CD8-positive, alpha-beta T cell (primary cell): ENCODE measurements at regions of chr1 and their contacts with region 1.

Region 1: GRCh38 chr1:112466078-112466660 is 42.6 kb upstream of the WNT2B start:
- DNase-seq: peak; percentile 66 to 90 (median 83)
- ATAC-seq: peak; percentile 95
- H3K4me3 ChIP-seq: peak overlapping the region; percentile 31 to 42
- H3K4me3 Mint-ChIP-seq: peak overlapping the region; percentile 80
- H3K27ac ChIP-seq: no peak overlapping the region
- H3K27ac Mint-ChIP-seq: no peak overlapping the region
- H3K4me1 ChIP-seq: peaks cover 8% of the 10 kb centered on the region
- H3K4me1 Mint-ChIP-seq: peaks cover 14% of the 10 kb centered on the region
- H3K27me3 ChIP-seq: peaks cover 0 to 9% of the 10 kb centered on the region in 2 experiments
- H3K27me3 Mint-ChIP-seq: peaks cover 22% of the 10 kb centered on the region
- CTCF ChIP-seq: peak; percentile 68

Region 2: GRCh38 chr1:111062081-111062480 is 1404.1 kb before region 1 on chr1:
- CTCF ChIA-PET with region 1: no interaction called
- POLR2A ChIA-PET with region 1: no interaction called
- intact Hi-C with region 1: no loop called
- DNase-seq: no peak
- ATAC-seq: no peak
- H3K4me3 ChIP-seq: no peak overlapping the region
- H3K4me3 Mint-ChIP-seq: no peak overlapping the region
- H3K27ac ChIP-seq: no peak overlapping the region
- H3K27ac Mint-ChIP-seq: no peak overlapping the region
- H3K4me1 ChIP-seq: no peaks in the 10 kb centered on the region
- H3K4me1 Mint-ChIP-seq: no peaks in the 10 kb centered on the region
- H3K27me3 ChIP-seq: no peaks in the 10 kb centered on the region
- H3K27me3 Mint-ChIP-seq: peaks cover 8% of the 10 kb centered on the region
- CTCF ChIP-seq: no peak

Region 3: GRCh38 chr1:112395821-112396652 is 70.1 kb before region 1 on chr1 and contains the start of gene CTTNBP2NL:
- CTCF ChIA-PET with region 1: interaction called, 111 read pairs
- POLR2A ChIA-PET with region 1: interaction called, 3 read pairs
- intact Hi-C with region 1: no loop called
- DNase-seq: peak; percentile 51 to 87 (median 78)
- ATAC-seq: peak; percentile 98
- H3K4me3 ChIP-seq: peak within 1 kb of the TSS; percentile 86 to 89
- H3K4me3 Mint-ChIP-seq: peak within 1 kb of the TSS; percentile 83
- H3K27ac ChIP-seq: no peak within 1 kb of the TSS
- H3K27ac Mint-ChIP-seq: peak within 1 kb of the TSS; percentile 37
- H3K4me1 ChIP-seq: peaks cover 15% of the 10 kb centered on the region
- H3K4me1 Mint-ChIP-seq: peaks cover 15% of the 10 kb centered on the region
- H3K27me3 ChIP-seq: peaks cover 3% of the 10 kb centered on the region in 2 experiments
- H3K27me3 Mint-ChIP-seq: peaks cover 21% of the 10 kb centered on the region
- CTCF ChIP-seq: no peak
- total RNA-seq, gene CTTNBP2NL: not detected

Region 4: DNA sequence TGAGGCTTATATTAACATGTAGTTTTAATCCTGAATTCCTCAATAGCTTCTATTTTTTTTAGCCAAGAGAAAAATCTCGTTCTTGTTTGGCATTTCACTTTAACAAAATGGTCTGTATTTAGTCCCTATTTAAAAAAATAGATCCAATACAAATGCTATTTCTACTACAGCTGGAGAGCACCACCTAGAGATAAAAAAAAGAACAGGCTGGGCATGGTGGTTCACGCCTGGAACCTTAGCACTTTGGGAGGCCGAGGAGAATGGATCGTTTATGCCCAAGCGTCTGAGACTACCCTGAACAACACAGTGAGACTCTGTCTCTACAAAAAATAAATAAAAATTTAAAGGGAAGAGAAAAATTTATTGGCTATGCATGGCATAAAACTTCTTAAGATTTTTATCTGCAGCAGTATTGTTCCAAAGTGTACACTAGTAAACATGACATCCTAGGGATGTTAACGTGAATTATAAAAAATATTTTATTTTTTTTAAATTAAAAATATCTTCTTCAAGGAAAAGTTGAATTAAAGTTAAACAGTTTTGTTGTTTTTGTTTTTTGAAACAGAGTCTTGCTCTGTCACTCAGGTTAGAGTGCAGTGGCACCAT is 148.4 kb after region 1 on chr1:
- CTCF ChIA-PET with region 1: no interaction called
- POLR2A ChIA-PET with region 1: no interaction called
- intact Hi-C with region 1: loop called in 1 of 2 experiments (anchors 1 kb)
- DNase-seq: peak in 2 of 9 experiments; percentile 46 to 58
- ATAC-seq: no peak
- H3K4me3 ChIP-seq: no peak overlapping the region
- H3K4me3 Mint-ChIP-seq: no peak overlapping the region
- H3K27ac ChIP-seq: no peak overlapping the region
- H3K27ac Mint-ChIP-seq: no peak overlapping the region
- H3K4me1 ChIP-seq: peaks cover 8% of the 10 kb centered on the region
- H3K4me1 Mint-ChIP-seq: peaks cover 12% of the 10 kb centered on the region
- H3K27me3 ChIP-seq: no peaks in the 10 kb centered on the region
- H3K27me3 Mint-ChIP-seq: no peaks in the 10 kb centered on the region
- CTCF ChIP-seq: peak; percentile 60